A549 (cell line): ENCODE measurements at regions of chr2 and their contacts with region 1.

Region 1: GRCh38 chr2:219498280-219499057 is at the start of gene GMPPA:
- DNase-seq: peak; percentile 98 to 99
- ATAC-seq: peak; percentile 81 to 90
- H3K4me3 ChIP-seq: peak within 1 kb of the TSS; percentile 75
- H3K27ac ChIP-seq: peak within 1 kb of the TSS; percentile 84 to 91
- H3K4me1 ChIP-seq: peaks cover 22% of the 10 kb centered on the region; the same call in 2 of the 3 replicates
- CTCF ChIP-seq: no peak
- EP300 ChIP-seq: no peak
- POLR2A ChIP-seq: peak; percentile 89
- RAD21 ChIP-seq: no peak
- polyA plus RNA-seq, gene GMPPA: 46.2 and 55.3 TPM in 2 replicates

Region 2: DNA sequence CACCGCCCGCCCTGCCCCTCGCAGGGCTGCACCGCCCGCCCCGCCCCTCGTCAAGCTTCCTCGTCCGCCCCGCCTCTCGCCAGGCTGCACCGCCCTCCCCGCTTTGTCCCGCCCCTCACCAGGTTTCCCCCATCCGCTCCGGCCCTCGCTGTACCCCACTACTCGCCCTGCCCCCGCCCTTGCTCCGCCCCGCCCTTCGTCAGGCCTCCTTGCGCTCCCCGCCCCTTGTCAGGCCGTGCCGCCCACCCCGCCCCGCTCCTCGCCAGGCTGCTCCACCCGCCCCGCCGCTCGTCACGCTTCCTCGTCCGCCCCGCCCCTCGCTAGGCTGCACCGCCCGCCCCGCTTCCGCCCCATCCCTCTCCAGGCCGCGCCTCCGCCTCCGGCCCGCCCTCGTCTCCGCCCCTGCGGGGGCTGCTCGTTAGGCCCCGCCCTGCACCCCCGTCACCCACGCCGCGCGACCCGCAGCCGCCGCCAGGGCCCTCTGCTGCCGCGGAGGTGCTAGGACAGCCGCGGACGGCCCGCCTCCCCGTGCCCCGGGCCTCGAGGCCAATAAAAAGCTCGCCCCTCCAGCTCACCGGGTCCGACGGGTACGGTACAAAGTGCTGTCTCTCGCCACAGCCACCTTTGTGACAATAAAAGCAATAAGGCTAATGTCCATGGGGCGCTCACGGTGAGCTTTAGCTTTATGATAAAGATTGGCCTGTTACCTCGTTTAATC is 110.2 kb before region 1 on chr2:
- CTCF ChIA-PET with region 1: interaction called, 9 read pairs
- POLR2A ChIA-PET with region 1: interaction called, 16 read pairs
- DNase-seq: peak; percentile 76 to 96
- ATAC-seq: peak; percentile 77 to 82
- H3K4me3 ChIP-seq: peak overlapping the region; percentile 99
- H3K27ac ChIP-seq: peak overlapping the region; percentile 75 to 96
- H3K4me1 ChIP-seq: peaks cover 9% of the 10 kb centered on the region
- CTCF ChIP-seq: peak; percentile 39; the same call in 2 of the 3 replicates
- EP300 ChIP-seq: no peak
- POLR2A ChIP-seq: no peak
- RAD21 ChIP-seq: peak in 1 of 2 experiments; percentile 38; a peak in 1 of 5 replicates

Region 3: DNA sequence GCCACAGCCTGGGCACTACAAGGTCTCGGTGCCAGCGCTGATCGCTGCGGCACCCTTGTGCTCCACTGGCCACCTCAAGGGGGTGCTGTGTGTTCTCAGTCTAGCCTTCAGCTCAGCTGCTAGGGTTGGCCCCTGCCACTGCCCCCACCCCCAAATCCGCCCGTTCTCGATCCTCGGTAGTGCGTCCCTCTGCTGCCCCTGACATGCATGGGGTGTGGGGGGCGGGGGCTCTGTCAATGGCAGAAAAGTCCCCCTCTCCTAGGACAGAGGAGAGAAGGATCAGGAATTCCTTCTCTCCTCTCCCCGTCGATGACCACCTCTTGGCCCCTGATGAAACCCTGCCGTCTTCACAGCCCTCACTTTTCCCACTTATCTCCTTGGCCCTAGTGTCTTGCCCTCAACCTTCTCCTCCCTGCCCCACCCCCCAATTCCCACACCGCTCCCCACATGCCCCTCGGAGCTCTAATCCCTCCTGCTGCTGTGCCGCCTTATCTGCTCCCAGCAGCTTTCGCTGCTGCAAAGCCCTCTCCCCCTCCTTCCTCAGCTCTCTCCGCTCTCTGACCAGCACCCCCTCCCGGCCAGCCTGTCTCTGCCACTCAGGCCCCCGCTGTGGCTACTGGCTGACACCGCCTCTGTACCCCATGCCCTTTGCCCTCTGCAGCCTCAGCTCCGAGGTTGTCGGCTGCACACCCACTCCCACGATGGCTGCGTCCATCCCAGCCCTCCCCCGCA is 11.5 kb after region 1 on chr2:
- CTCF ChIA-PET with region 1: interaction called, 3,291 read pairs
- POLR2A ChIA-PET with region 1: interaction called, 24 read pairs
- DNase-seq: peak in 1 of 2 experiments; percentile 63
- ATAC-seq: peak; percentile 83 to 93
- H3K4me3 ChIP-seq: peak overlapping the region; percentile 38
- H3K27ac ChIP-seq: peak overlapping the region in 1 of 2 experiments; percentile 80; a peak in 3 of 6 replicates
- H3K4me1 ChIP-seq: peaks cover 12% of the 10 kb centered on the region
- CTCF ChIP-seq: peak; percentile 65
- EP300 ChIP-seq: no peak
- POLR2A ChIP-seq: no peak
- RAD21 ChIP-seq: peak; percentile 33 to 42; a peak in 4 of 5 replicates

Region 4: DNA sequence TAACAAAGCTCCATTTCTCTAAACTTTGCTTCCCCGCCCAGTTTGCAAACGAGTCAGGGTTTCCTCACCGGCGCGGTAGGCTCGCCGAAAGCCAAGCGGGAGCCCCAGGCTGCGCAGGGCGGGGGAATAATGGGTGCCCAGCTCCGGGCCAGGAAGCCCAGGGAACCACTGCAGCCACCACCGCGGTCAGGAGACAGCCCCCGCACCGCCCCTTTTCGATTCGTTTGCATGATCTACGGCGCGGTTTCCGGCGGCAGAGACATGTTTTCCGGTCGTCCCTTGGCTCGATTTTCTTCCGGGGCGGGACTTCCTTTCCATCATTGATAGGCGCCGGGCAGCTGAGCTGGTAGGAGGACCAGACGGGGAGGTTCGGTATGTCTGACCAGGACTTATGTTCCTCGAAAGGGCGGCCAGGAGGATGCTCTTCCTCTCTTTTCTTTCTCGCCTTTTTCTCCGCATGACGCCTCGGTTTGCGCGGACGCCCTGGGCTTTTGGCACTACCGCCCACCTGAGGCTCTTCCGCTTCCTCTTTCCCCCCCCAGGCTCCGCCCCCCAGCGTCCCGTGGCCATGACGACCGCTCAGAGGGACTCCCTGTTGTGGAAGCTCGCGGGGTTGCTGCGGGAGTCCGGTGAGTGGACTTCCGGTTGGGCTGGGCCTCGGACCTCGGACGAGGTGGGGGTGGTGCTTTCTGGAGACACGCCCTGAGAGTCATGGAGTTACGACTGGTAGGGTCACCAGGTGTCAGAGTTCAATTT is 99.3 kb after region 1 on chr2 and contains the start of gene STK11IP:
- CTCF ChIA-PET with region 1: no interaction called
- POLR2A ChIA-PET with region 1: interaction called, 10 read pairs
- DNase-seq: peak; percentile 98 to 99
- ATAC-seq: peak; percentile 96 to 97
- H3K4me3 ChIP-seq: peak within 1 kb of the TSS; percentile 71
- H3K27ac ChIP-seq: peak within 1 kb of the TSS; percentile 90 to 94
- H3K4me1 ChIP-seq: peaks cover 11% of the 10 kb centered on the region; the same call in 2 of the 3 replicates
- CTCF ChIP-seq: no peak
- EP300 ChIP-seq: no peak
- POLR2A ChIP-seq: peak; percentile 93
- RAD21 ChIP-seq: no peak
- polyA plus RNA-seq, gene STK11IP: 13.3 and 18.4 TPM in 2 replicates

Region 5: DNA sequence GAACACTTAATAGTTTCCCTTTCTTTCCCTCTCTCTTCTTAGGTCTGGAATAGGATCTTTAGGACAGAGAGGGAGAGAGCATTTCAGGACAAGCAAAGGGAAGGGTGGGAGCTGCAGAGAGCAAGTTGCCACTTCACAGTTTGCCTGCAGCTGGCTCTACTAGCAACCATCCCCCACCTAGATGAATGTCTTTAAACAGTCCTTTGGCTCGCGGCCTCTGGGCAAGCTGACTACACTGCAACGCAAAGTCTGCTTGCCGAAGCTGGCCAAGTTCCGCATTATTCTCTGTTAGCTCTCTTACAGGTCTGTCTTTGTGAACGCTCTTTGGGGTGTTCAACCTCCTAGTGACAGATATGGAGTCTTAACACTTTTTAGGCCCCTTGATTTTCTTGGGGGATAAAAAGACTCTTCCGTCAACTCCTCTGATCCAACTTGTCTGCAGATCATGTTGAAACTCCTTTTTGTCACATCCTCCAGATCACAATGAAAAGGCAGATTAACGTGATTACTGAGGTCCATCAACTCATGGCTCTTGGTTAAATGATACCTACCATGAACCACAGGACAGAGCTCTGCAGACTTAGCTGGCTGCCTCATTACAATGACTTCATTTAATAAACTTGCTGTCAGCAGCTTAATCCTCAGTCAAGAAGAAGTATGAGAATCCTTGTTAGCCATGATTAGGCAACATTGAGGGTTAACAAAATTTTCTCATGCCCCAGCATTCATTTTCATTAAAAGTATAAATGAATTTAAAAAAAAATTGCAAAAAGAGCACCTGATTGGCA is 203.6 kb after region 1 on chr2:
- CTCF ChIA-PET with region 1: no interaction called
- POLR2A ChIA-PET with region 1: no interaction called
- DNase-seq: no peak
- ATAC-seq: no peak
- H3K4me3 ChIP-seq: no peak overlapping the region
- H3K27ac ChIP-seq: no peak overlapping the region
- H3K4me1 ChIP-seq: no peaks in the 10 kb centered on the region
- CTCF ChIP-seq: no peak
- EP300 ChIP-seq: no peak
- POLR2A ChIP-seq: no peak
- RAD21 ChIP-seq: no peak